Motor neuron (in vitro differentiated cells): ENCODE measurements at regions of chr3 and their contacts with region 1.

Region 1: GRCh38 chr3:147418808-147419701 is 9.9 kb downstream of the ZIC1 start:
- ATAC-seq: peak in 7 of 8 experiments; percentile 57 to 97 (median 90)
- H3K4me3 ChIP-seq: peak overlapping the region; percentile 25 to 38 (median 31)
- H3K27ac ChIP-seq: no peak overlapping the region
- H3K4me1 ChIP-seq: peaks cover 0 to 6% of the 10 kb centered on the region in 2 donors

Region 2: DNA sequence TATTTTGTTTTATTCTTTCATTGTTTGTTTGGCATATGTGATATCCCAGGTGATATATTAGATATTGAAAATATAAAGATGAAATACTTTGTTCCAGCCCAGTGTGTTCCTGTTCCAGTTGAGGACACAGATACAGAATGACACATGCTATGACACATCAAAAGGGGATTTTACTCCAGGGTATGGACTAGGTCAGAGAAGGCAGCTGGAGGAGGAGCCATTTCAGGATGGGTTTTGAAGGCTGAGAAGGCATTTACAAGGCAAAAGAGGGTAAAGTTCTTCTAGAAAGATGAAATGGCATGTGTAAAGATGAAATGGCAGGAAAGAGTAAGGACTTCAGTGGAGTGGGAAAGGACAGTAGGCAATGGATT is 153.9 kb after region 1 on chr3:
- in situ Hi-C with region 1: loop called in 1 of 9 experiments (anchors 10 kb)
- ATAC-seq: peak in 2 of 8 experiments; percentile 33 to 48
- H3K4me3 ChIP-seq: no peak overlapping the region
- H3K27ac ChIP-seq: no peak overlapping the region
- H3K4me1 ChIP-seq: no peaks in the 10 kb centered on the region

Region 3: DNA sequence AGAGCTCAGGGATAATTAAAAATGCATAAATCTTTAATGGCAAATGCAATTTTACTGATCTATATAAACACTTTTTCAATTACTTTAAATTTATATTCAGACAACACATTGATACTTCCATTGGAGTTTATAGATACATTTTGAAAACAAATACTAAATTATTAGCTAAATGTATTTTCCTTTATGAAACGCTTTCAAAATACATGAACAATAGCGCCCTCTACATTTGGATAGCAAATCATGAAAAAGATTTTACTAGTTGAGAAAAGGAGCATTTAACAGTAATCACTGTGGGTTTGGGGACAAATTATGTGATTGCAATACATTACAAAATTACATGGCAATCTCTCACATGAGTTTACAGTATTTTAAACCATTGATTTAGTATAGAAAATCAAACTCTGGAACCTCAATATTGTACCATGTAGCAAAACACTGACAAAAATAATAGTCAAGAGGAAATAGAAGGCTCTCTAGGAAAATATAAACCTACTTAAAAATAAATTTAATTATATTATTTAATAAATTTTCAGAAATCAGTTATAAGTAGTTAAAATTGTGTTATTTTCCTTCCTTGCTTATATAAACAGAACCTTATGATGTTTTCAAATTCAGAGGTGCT is 198.1 kb after region 1 on chr3:
- in situ Hi-C with region 1: loop called in 1 of 9 experiments (anchors 25 kb)
- ATAC-seq: no peak
- H3K4me3 ChIP-seq: no peak overlapping the region
- H3K27ac ChIP-seq: no peak overlapping the region
- H3K4me1 ChIP-seq: peaks cover 8 to 19% of the 10 kb centered on the region in 2 donors

Region 4: GRCh38 chr3:147963711-147964110 is 544.7 kb after region 1 on chr3:
- in situ Hi-C with region 1: no loop called
- ATAC-seq: no peak
- H3K4me3 ChIP-seq: no peak overlapping the region
- H3K27ac ChIP-seq: no peak overlapping the region
- H3K4me1 ChIP-seq: no peaks in the 10 kb centered on the region

Region 5: DNA sequence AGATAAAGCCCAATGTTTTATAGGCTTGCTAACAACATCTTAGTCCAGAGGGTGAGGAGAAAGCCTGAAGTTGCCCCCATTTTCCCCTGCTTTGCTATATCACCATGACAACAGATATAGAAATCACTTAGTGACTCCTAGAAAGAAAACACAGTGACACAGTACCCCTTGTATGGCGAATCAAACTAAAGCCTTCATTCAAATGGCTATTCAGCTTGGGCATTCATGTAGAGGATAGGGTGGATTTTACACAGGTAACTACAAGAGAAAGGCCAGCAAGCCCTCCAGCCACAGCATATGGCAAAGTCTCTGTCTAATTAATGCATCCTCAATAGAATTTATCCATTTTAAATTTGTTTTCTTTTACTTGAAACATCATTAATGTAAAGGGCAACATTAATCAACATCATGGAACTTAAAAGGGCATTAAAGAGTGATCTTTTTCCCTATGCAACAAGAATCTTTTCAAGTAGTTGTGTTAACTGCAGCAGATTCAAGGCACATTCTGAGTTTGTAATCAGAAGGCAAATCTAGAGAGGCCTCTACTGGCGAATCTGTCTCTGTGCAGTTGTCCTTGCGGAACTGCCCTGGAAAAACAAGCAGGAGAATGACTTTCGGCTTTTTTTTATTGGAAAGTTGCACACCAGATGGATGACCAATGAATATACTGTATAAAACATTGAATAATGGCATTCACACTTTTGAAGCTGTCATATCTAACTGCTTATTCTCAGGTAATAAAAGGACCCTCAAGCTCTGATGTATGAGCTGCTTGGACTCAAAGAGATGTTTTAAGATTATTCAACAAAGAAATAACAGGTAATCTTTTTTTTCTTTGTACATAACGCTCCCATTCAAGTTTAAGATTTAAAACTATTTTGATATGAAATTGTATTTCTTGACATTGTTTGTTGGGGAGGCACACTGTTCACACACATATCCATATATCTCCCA is 657.0 kb after region 1 on chr3:
- in situ Hi-C with region 1: loop called in 1 of 9 experiments (anchors 25 kb)
- ATAC-seq: peak; percentile 83 to 94 (median 90)
- H3K4me3 ChIP-seq: no peak overlapping the region
- H3K27ac ChIP-seq: no peak overlapping the region
- H3K4me1 ChIP-seq: peaks cover 3 to 10% of the 10 kb centered on the region in 2 donors